PC-3 (cell line): ENCODE measurements at regions of chr11 and their contacts with region 1.

Region 1: DNA sequence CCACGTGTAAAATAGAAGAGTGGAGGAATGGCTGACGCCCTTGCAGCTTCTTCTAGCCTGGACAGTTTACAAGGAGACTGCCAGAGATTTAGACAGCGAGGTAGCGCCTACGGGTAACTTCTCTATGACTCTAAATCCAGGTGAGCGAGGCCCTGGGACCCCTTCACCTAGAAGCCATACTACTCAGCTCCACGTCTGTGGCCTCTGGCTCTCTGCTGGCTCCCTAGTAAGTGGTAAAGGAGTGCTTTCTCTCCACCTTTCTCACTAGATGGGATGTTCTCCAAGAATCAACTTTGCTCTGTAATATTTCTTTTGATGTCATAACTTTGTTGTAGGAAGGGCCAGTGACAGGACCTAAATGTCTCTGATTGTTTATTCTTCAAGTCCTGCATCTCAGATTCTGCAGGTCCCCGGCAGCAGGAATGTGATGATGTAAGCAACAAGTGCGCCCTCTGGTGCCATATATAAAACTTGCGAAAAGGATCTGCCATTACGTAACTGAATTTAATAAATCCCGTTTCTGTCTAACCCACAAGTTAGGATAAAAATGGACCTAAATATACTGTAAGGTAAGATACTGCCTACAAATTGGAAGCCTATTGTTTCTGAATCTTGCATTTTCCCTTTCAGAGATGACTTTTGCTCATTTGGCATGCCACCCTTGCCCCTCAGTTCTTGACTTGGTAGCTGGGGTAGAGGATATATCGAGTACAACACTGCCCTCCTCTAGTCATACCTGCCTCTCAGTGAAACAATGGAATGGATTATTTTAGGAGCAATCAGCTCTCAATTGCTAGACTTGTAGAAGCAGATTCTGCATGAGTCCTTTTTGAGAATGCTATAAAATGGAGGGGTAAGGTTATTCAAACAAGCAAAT is 11.0 kb upstream of the PTPN5 start:
- DNase-seq: peak; percentile 78
- ATAC-seq: peak; percentile 45
- H3K4me3 ChIP-seq: no peak overlapping the region
- H3K27ac ChIP-seq: no peak overlapping the region
- H3K4me1 ChIP-seq: peaks cover 38% of the 10 kb centered on the region
- H3K27me3 ChIP-seq: no peaks in the 10 kb centered on the region; the same call in 1 of the 2 replicates
- CTCF ChIP-seq: peak; percentile 80

Region 2: DNA sequence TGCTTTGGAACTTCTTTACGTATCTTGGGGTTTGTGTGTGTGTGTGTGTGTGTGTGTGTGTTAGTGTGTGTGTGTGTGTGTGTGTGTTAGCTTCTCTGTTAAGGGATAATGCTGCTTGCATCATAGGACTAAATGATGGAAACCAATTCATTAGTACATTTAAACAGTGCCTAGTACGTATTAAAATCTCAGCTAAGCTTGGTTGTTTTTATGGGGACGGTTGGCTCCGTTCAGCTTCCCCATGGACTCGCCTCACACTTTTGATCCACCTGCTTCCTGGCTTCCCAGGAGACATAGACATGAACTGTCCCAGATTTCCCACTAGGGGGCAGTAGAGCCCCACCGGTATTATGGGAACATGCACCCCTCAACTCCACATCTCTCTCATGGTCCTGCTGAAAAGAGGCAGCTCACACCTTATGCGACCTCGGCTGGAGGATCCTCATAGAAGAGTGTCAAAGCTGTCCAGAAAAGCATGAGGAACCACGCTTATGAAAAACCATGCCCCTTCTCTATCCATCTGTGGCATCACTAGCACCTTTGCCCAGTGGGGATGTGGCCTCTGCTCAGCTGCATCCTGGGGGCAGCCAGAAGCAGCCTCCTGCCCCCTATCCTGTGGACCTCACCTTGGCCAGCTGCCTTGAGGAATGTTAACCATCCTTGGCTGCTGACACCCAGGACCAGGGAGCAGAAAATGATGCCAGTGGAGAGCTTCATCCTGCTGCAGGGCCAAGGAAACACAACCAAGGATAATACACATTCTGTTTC is 687.1 kb before region 1 on chr11:
- CTCF ChIA-PET with region 1: no interaction called
- POLR2A ChIA-PET with region 1: no interaction called
- intact Hi-C with region 1: loop called (anchors 5 kb)
- DNase-seq: peak; percentile 75
- ATAC-seq: peak; percentile 97
- H3K4me3 ChIP-seq: no peak overlapping the region
- H3K27ac ChIP-seq: no peak overlapping the region
- H3K4me1 ChIP-seq: no peaks in the 10 kb centered on the region
- H3K27me3 ChIP-seq: peaks cover 28% of the 10 kb centered on the region
- CTCF ChIP-seq: peak; percentile 87

Region 3: GRCh38 chr11:18775492-18776292 is 26.9 kb before region 1 on chr11:
- CTCF ChIA-PET with region 1: no interaction called
- POLR2A ChIA-PET with region 1: no interaction called
- intact Hi-C with region 1: loop called (anchors 1 kb)
- DNase-seq: peak; percentile 79
- ATAC-seq: peak; percentile 97
- H3K4me3 ChIP-seq: no peak overlapping the region
- H3K27ac ChIP-seq: no peak overlapping the region
- H3K4me1 ChIP-seq: 0 out of 2 replicates have a peak, but pooled peaks cover 4% of the 10 kb centered on the region
- H3K27me3 ChIP-seq: no peaks in the 10 kb centered on the region
- CTCF ChIP-seq: peak; percentile 92

Region 4: DNA sequence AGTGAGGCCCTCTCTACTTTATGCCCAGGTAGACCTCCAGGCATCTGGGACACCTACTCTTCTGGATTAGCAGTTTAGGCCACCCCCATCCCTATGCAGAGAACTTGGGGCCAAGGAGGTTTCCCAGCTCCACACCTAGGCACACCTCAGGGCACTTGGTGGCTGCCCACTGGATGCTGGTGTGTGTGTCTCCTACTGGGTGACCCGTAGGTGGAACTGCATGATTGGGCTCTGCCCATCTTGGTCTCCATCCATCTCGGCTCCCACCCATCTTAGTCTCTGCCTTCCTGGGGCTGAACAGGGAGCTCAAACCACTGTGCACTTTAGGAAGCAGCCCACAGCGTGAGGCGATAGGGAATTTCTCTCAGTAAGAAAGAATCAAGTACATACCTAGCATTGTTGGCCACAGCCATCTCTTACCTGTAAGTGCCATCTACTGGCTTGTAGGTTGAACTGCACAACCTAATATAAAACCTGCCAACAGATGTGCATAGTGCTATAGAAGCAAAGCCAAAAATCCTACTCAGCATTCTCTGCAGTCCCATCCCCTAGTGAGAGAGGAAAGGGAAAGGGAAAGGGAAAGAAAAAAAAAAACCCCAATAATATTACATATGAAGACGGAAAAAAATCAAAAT is 50.6 kb after region 1 on chr11:
- CTCF ChIA-PET with region 1: no interaction called
- POLR2A ChIA-PET with region 1: no interaction called
- intact Hi-C with region 1: loop called (anchors 2 kb)
- DNase-seq: peak; percentile 63
- ATAC-seq: peak; percentile 93
- H3K4me3 ChIP-seq: no peak overlapping the region
- H3K27ac ChIP-seq: no peak overlapping the region
- H3K4me1 ChIP-seq: no peaks in the 10 kb centered on the region; the same call in 1 of the 2 replicates
- H3K27me3 ChIP-seq: peaks cover 25% of the 10 kb centered on the region
- CTCF ChIP-seq: peak; percentile 78

Region 5: GRCh38 chr11:18865951-18866350 is 63.3 kb after region 1 on chr11:
- CTCF ChIA-PET with region 1: no interaction called
- POLR2A ChIA-PET with region 1: no interaction called
- intact Hi-C with region 1: no loop called
- DNase-seq: no peak
- ATAC-seq: no peak
- H3K4me3 ChIP-seq: no peak overlapping the region
- H3K27ac ChIP-seq: no peak overlapping the region
- H3K4me1 ChIP-seq: no peaks in the 10 kb centered on the region
- H3K27me3 ChIP-seq: peaks cover 73% of the 10 kb centered on the region
- CTCF ChIP-seq: no peak

Region 6: DNA sequence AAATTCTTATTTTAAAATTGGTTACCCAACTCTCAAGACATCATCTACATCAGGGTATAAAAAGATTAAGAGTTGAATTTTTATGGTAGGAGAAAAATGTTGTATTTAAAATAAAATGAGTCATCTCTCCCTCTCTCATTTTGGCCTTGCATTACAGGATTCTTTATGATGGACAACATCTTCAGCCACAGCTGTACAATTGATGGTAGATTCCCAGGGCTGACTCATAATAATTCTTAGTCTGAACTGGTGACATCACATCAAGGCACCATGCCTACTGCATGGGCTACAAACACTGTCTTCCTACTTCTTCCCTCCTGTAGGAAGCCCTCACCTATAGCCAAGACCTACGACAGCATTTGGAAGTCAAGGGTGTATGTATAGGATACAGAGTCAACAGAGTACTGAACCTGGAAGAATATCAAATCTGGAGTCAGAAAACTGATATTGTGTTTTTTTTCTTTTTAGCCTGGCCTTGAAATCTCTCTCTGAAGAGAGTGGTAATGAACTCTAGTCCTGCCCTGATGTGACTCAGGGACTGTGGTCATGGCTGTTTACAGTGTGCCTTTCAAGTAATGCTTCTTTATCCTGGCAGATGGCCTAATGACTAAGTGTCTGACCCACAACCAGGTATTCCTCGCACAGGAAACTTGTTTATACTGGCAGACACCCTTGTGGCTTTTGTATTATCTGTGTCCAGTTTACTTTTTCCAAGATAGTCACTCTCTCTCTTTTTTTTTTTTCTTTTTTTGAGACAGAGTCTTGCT is 225.4 kb after region 1 on chr11:
- CTCF ChIA-PET with region 1: no interaction called
- POLR2A ChIA-PET with region 1: no interaction called
- intact Hi-C with region 1: no loop called
- DNase-seq: peak; percentile 98
- ATAC-seq: peak; percentile 98
- H3K4me3 ChIP-seq: no peak overlapping the region
- H3K27ac ChIP-seq: peak overlapping the region; percentile 98
- H3K4me1 ChIP-seq: peaks cover 19% of the 10 kb centered on the region
- H3K27me3 ChIP-seq: no peaks in the 10 kb centered on the region
- CTCF ChIP-seq: no peak